ENCODE measurements at regions of chr1 and their contacts with region 1.

Region 1: GRCh38 chr1:71521655-71522264 is 440.9 kb upstream of the ZRANB2 start:
- DNase-seq: peak; percentile 65
- H3K4me3 ChIP-seq: no peak overlapping the region
- H3K27ac ChIP-seq: no peak overlapping the region
- H3K4me1 ChIP-seq: no peaks in the 10 kb centered on the region
- H3K27me3 ChIP-seq: no peaks in the 10 kb centered on the region
- CTCF ChIP-seq: peak; percentile 60

Region 2: GRCh38 chr1:71093938-71094337 is 427.8 kb before region 1 on chr1:
- intact Hi-C with region 1: loop called (anchors 5 kb)
- DNase-seq: no peak
- H3K4me3 ChIP-seq: no peak overlapping the region
- H3K27ac ChIP-seq: no peak overlapping the region
- H3K4me1 ChIP-seq: no peaks in the 10 kb centered on the region
- H3K27me3 ChIP-seq: no peaks in the 10 kb centered on the region
- CTCF ChIP-seq: peak; percentile 23

Region 3: DNA sequence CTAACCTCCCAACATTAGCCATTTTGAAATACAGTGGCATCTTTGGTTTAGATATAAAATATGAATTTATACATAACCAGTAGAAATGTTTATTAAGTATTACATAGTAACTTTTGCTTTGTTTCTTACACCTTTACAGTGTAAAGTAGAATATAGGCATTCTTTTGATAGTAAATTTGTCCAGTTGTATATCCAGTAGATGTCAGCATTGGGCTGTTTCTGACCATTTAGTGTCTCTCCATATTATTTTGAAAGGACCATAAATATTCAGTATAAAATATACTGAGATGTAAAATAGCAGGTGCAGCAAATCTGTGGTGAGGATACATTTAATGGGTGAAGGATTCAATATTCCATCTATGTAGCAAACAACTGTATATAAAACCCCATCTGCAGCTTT is 325.1 kb before region 1 on chr1:
- intact Hi-C with region 1: loop called (anchors 5 kb)
- DNase-seq: no peak
- H3K4me3 ChIP-seq: no peak overlapping the region
- H3K27ac ChIP-seq: no peak overlapping the region
- H3K4me1 ChIP-seq: no peaks in the 10 kb centered on the region
- H3K27me3 ChIP-seq: no peaks in the 10 kb centered on the region
- CTCF ChIP-seq: peak; percentile 27

Measured in colonic mucosa (tissue), 4 donors.